ENCODE measurements at regions of chr16 and their contacts with region 1.

Region 1: GRCh38 chr16:5025171-5025632 is 8.5 kb downstream of the NAGPA start:
- DNase-seq: peak; percentile 32 to 70 (median 41)
- H3K4me3 ChIP-seq: no peak overlapping the region
- H3K27ac ChIP-seq: no peak overlapping the region
- H3K4me1 ChIP-seq: no peaks in the 10 kb centered on the region
- H3K27me3 ChIP-seq: no peaks in the 10 kb centered on the region
- CTCF ChIP-seq: no peak
- EP300 ChIP-seq: no peak
- POLR2A ChIP-seq: no peak

Region 2: DNA sequence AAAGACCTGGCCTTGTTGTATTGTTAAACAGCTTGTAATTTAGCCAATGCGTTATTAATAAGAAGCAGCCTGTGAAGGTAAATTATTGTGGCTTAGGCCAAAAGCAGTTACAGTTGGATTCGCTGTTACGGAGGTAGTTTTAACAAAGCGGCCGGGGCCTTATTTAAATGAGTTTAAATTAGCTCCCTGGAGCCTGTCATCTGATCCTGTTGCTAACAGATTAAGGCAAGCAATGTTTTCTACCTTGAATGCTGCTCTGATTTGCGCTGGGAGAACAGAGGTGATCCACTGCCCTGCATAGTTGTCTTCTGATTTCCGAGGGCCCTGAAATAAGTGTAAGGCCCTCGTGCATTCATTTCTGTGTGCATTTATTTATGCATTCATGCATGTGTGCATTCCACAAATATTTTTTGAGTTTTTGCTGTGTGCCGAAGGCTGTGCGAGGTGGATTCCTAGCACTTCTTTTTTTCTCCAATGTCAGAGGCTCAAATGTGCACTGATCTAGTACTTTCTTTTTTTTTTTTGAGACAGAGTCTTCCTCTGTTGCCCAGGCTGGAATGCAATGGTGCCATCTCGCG is 56.2 kb before region 1 on chr16:
- intact Hi-C with region 1: loop called in 1 of 4 experiments (anchors 10 kb)
- DNase-seq: no peak
- H3K4me3 ChIP-seq: no peak overlapping the region
- H3K27ac ChIP-seq: no peak overlapping the region
- H3K4me1 ChIP-seq: no peaks in the 10 kb centered on the region
- H3K27me3 ChIP-seq: no peaks in the 10 kb centered on the region
- CTCF ChIP-seq: no peak
- EP300 ChIP-seq: no peak
- POLR2A ChIP-seq: no peak

Measured in ovary (tissue), 10 donors.